ENCODE measurements at regions of chr1 and their contacts with region 1.

Region 1: DNA sequence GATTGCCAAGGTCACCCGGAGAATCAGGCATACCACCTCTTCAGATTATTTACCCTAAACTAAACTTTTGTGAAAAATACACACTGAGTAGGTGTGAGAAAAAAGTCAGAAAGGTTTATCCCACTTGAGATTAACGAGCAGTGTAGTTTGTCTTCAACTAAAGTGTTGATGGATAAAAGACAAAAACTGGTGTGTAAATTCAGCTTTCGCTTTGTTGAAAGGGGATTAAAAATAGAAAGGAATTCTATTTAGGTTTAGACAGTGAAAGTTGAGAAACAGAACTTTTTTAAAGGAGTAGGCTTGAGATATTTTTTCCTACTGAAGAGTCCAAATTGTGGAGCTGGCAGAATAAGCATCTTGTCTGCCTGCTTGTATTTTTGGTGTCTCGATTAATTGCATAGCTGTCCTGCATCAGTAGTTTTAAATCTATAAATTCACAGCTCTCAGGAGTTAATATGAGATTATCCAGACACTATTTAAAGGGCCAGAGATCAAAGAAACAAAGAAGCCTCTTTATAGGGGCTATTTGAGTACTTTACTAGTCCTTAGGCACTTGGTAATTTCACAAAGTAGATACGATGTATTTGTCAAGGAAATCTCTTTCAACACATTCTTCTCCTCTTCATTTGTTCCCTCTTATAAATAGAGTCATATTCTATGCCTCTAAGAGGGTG is 46.7 kb upstream of the RABGAP1L start:
- DNase-seq: no peak

Region 2: GRCh38 chr1:173870252-173871075 is 242.2 kb before region 1 on chr1:
- intact Hi-C with region 1: no loop called
- DNase-seq: peak in 32 of 42 donors; percentile 11 to 85 (median 42)

Region 3: DNA sequence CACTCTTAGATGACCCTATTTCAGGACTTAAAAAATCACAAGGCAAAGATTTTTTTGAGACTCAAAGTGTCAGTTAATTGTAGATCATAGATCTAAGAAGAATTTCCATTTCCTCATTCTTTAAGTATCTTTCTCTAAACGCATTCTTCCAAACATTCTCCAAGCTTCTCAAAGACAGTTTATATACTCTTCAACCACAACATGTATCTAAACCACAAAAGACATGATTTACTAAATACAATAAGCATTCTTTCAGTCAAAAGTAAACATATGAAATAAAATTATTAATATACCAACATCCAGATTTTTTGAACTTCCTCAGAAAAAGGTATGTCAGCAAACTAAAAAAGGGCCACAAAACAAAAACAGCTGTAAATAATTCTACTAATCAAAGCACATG is 114.8 kb before region 1 on chr1:
- intact Hi-C with region 1: no loop called
- DNase-seq: no peak

Region 4: DNA sequence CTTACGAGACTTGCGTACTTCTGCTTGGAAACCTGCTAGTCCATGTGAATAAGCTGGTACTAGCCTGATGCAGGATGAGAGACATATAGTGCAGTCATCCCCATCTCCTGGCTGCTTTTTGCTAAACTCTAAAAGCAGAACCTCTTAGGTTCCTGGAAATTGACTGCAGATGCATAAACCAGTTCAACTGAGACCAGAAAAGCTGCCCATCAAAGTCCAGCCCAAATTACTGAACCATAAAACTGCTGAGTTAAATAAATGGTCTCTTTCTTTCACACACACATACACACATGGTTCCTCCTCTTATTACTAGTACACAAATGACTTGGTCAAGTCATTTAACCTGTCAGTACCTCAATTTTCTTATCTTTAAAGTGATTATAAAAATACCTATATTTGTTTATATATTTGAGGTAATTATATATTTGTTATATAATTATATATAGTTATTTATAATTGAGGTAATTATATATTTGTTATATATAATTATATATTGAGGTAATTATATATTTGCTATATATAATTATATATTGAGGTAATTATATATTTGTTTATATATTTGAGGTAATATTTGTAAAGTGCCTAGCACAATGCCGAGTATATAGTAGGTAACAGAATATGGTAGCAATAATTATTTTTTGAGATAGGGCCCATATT is 21.5 kb after region 1 on chr1:
- intact Hi-C with region 1: loop called (anchors 2 kb)
- DNase-seq: no peak

Region 5: DNA sequence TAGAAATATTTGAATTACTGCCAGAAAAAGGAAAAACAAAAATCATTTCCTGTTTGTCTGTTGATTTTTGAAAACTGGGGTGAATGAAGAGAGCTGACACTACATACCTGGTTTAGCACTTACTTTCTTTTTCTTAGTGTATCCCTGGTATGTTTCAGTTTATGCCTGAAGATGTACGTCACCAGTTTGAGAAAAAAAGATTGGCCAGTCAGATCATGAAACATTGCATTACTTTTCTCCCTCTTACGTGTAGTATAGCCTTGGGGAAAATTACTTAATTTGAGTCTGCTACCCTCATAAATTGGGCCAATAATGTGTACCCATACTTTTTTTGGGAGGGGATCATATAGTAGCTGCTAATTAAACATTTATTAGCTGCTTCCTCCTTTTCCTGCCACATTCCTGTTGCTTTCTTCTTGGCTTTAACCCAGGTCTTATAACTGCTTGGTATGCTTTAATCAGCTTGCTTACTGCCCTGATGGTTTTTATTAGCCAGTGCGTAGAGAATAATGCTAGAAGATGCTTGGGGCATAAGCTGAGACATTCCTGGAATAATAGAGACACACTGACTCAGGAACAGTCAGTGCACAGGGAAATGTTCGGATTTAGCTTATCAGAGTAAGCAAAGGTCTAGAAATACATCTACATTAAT is 78.8 kb after region 1 on chr1:
- intact Hi-C with region 1: no loop called
- DNase-seq: no peak

Measured in head of caudate nucleus (tissue), 42 donors.